ENCODE measurements at regions of chr1 and their contacts with region 1.

Region 1: GRCh38 chr1:94335950-94336349 is 82.2 kb upstream of the ABCD3 start:
- DNase-seq: peak; percentile 51
- H3K4me3 ChIP-seq: peak overlapping the region in 1 of 2 experiments; percentile 46; a peak in 1 of 4 replicates
- H3K27ac ChIP-seq: no peak overlapping the region
- H3K4me1 ChIP-seq: peaks cover 6 to 11% of the 10 kb centered on the region in 2 experiments; a peak in 3 of 4 replicates
- H3K27me3 ChIP-seq: 0 out of 2 replicates have a peak, but pooled peaks cover 4% of the 10 kb centered on the region
- CTCF ChIP-seq: peak; percentile 99
- EP300 ChIP-seq: no peak
- RAD21 ChIP-seq: peak; percentile 100

Region 2: GRCh38 chr1:94101541-94102525 is 234.1 kb before region 1 on chr1:
- CTCF ChIA-PET with region 1: interaction called, 18 read pairs
- POLR2A ChIA-PET with region 1: no interaction called
- DNase-seq: peak; percentile 34
- H3K4me3 ChIP-seq: no peak overlapping the region
- H3K27ac ChIP-seq: peak overlapping the region in 1 of 2 experiments; percentile 16; a peak in 1 of 4 replicates
- H3K4me1 ChIP-seq: peaks cover 6 to 17% of the 10 kb centered on the region in 2 experiments; a peak in 1 of 4 replicates
- H3K27me3 ChIP-seq: no peaks in the 10 kb centered on the region
- CTCF ChIP-seq: no peak
- EP300 ChIP-seq: no peak
- RAD21 ChIP-seq: no peak

Region 3: DNA sequence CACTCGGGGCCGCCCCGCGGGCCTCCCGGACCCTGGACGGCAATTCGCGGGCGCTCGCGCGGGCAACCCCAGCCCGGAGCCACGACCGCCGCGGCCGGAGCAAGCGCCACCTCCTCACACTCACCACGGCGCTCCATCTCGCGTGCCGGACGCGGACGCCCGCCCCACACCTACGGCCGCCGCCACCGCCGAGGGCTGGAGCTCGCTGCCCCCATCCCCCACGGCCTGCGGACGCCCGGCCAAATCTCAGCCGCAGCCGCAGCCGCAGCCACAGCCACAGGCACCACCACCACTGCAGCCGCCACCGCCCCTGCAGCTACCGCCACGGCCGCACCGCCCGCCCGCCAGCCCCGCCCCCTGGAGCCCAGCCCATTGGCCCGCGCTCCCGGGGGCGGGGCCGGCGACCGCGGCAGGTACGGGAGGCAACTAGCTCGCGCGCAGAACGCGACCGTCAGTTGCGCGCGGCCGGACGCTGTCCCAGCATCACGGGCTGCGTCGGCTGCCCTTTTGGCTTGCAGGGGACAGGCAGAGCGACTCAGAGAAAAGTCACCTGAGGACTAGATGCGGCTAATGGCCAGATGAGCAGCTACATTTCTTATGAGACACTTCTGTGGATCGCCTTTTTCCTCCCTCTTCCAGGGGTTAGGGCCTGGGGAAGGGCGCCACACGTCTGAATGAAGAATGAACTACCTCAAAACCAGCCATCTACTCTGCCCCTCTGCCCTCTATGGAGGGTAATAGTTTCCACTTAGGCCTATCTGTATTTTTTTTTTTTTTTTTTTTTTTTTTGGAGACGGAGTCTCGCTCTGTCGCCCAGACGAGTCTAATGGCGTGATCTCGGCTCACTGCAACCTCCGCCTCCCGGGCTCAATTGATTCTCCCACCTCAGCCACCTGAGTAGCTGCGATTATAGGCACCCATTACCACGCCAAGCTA is 98.4 kb before region 1 on chr1 and contains the start of gene ARHGAP29:
- CTCF ChIA-PET with region 1: interaction called, 186 read pairs
- POLR2A ChIA-PET with region 1: no interaction called
- DNase-seq: peak; percentile 96
- H3K4me3 ChIP-seq: peak within 1 kb of the TSS; percentile 89 to 93
- H3K27ac ChIP-seq: peak within 1 kb of the TSS; percentile 31 to 76
- H3K4me1 ChIP-seq: peaks cover 6 to 12% of the 10 kb centered on the region in 2 experiments; a peak in 2 of 4 replicates
- H3K27me3 ChIP-seq: no peaks in the 10 kb centered on the region
- CTCF ChIP-seq: no peak; the same call in 1 of the 2 replicates
- EP300 ChIP-seq: no peak
- RAD21 ChIP-seq: peak; percentile 31
- polyA plus RNA-seq, gene ARHGAP29: 20.1 and 23.3 TPM in 2 replicates

Region 4: GRCh38 chr1:94270801-94271203 is 65.1 kb before region 1 on chr1:
- CTCF ChIA-PET with region 1: interaction called, 10 read pairs
- POLR2A ChIA-PET with region 1: no interaction called
- DNase-seq: no peak
- H3K4me3 ChIP-seq: no peak overlapping the region
- H3K27ac ChIP-seq: peak overlapping the region in 1 of 2 experiments; percentile 58; a peak in 2 of 4 replicates
- H3K4me1 ChIP-seq: peaks cover 3 to 12% of the 10 kb centered on the region in 2 experiments
- H3K27me3 ChIP-seq: no peaks in the 10 kb centered on the region
- CTCF ChIP-seq: no peak
- EP300 ChIP-seq: peak in 1 of 2 experiments; percentile 92; a peak in 2 of 4 replicates
- RAD21 ChIP-seq: no peak

Region 5: GRCh38 chr1:94325379-94326302 is 10.3 kb before region 1 on chr1:
- CTCF ChIA-PET with region 1: interaction called, 49 read pairs
- POLR2A ChIA-PET with region 1: interaction called, 3 read pairs
- DNase-seq: no peak
- H3K4me3 ChIP-seq: peak overlapping the region; percentile 6 to 30; a peak in 1 of 4 replicates
- H3K27ac ChIP-seq: peak overlapping the region; percentile 88 to 89
- H3K4me1 ChIP-seq: peaks cover 30 to 50% of the 10 kb centered on the region in 2 experiments
- H3K27me3 ChIP-seq: no peaks in the 10 kb centered on the region
- CTCF ChIP-seq: no peak
- EP300 ChIP-seq: peak in 1 of 2 experiments; percentile 98; a peak in 3 of 4 replicates
- RAD21 ChIP-seq: no peak